ENCODE measurements at regions of chr17 and their contacts with region 1.

Region 1: DNA sequence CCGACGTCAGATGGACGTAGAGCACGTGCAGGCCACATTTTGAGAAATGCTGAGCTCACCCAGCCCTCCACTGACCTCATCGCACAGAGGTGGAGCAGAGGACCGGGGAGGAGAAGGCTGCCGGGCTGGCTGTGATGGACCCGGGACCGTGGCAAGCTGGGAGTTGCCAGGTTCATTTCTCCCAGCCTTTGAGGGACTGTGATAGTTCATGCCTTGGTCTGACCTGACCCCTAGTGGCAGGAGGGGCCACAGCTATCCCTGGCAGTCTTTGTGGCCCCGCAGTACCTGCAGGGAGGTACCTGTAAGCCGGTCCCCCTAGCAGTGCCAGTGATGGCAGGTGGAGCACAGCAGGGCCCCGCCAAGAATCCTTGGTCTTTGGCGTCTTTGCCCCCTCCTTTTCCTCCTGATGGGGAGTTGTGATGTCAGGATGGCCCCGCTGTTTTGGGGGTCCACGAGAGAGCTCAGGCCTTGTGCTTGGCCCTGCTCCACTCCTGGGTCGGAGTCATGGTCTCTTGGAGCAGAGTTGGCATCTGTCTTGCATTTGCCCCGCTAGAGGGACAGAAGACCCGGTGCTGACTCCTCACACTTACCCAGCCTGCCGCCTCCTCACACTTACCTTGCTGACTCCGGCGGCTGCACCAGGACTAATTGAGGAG is 50.4 kb downstream of the OR1D5 start:
- DNase-seq: peak; percentile 84
- CTCF ChIP-seq: peak; percentile 96

Region 2: GRCh38 chr17:2837147-2837561 is 175.9 kb before region 1 on chr17:
- in situ Hi-C with region 1: loop called (anchors 10 kb)
- DNase-seq: peak; percentile 79
- CTCF ChIP-seq: peak; percentile 52

Measured in GM13977 (cell line).